Activated CD4-positive, alpha-beta memory T cell treated with anti-CD3 and anti-CD28 coated beads, Interleukin-2, amount 10 ng/mL, durations not matched to agents 7 days and 5 days (primary cell): ENCODE measurements at regions of chr7 and their contacts with region 1.

Region 1: DNA sequence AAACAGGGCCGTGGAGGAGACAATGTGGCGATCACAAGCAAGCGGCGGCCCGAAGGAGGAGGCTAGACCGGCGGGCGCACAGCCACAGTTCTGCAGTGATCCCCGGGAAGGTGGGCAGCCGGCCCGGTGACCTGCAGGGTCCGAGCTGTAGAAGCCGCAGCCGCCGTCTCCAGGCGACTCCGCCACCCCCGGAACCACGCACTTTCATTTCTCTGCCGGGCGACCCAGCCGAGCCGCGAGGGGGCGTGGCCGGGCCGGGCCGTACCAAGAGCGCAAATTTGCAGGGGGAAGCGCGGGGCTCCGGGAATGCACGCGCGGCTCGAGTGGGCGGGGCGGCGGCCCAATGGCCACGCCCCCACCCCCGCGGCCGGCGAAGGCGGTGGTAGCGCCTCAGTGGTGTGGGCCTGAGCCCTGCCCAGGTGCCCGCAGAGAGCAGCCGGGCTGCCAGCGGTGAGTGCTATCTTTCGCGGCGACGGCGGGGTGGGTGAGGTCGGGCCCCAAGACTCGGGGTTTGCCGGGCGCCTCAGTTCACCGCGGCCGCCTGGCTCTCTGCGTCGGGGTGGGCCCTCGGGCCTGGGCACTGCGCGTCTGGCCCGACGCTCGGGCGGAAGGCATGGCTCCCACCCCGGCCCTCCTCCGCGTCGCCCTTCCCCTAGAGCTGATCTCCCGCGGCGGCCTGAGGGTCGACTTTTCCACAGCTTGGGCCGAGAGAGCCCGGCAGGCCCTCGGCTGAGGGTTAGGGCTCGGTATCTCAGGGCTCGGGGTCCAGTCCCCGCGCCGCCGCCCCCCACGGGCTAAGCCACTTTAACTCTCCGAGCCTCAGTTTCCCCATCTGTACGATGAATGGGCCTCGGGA is at the start of gene POR:
- DNase-seq: peak; percentile 97
- H3K4me3 Mint-ChIP-seq: peak within 1 kb of the TSS; percentile 86
- H3K27ac Mint-ChIP-seq: peak within 1 kb of the TSS; percentile 81
- H3K4me1 Mint-ChIP-seq: peaks cover 23% of the 10 kb centered on the region
- H3K27me3 Mint-ChIP-seq: no peaks in the 10 kb centered on the region
- total RNA-seq, gene POR: 34.0 to 45.3 TPM

Region 2: DNA sequence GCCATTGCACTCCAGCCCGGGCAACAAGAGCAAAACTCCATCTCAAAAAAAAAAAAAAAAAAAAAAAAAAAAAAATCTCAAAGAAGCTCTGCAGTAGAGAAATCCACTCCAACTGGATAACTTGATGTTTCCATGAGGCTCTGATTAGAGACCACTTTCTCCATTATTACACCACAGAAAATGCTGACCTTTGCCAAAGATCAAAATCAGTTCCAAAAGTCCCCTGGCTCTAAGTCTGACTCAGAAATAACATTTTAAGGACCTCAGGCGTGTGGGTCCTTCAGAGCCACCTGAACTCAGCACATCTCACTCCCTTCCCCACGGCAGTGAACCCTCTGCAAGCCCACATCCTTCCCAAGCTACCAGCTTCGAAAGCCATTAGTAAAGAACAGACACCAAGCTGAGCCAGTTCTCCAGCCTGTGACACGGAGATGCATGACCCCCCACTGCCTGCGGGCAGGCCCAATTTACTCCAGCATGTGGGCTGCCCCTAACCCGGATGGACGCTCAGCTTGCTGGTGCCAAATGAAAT is 93.3 kb after region 1 on chr7:
- CTCF ChIA-PET with region 1: interaction called, 4 read pairs
- POLR2A ChIA-PET with region 1: interaction called, 10 read pairs
- DNase-seq: peak; percentile 48
- H3K4me3 Mint-ChIP-seq: no peak overlapping the region
- H3K27ac Mint-ChIP-seq: peak overlapping the region; percentile 78
- H3K4me1 Mint-ChIP-seq: peaks cover 31% of the 10 kb centered on the region
- H3K27me3 Mint-ChIP-seq: peaks cover 6% of the 10 kb centered on the region